ENCODE measurements at regions of chr9 and their contacts with region 1.

Region 1: GRCh38 chr9:35903049-35903448 is 3.0 kb upstream of the HRCT1 start:
- DNase-seq: no peak
- ATAC-seq: no peak

Region 2: GRCh38 chr9:35945341-35946018 is 42.4 kb after region 1 on chr9:
- intact Hi-C with region 1: loop called (anchors 1 kb)
- DNase-seq: peak; percentile 92
- ATAC-seq: peak; percentile 91

Measured in sciatic nerve (tissue), 2 donors.